Endothelial cell of umbilical vein (primary cell): ENCODE measurements at regions of chr2 and their contacts with region 1.

Region 1: DNA sequence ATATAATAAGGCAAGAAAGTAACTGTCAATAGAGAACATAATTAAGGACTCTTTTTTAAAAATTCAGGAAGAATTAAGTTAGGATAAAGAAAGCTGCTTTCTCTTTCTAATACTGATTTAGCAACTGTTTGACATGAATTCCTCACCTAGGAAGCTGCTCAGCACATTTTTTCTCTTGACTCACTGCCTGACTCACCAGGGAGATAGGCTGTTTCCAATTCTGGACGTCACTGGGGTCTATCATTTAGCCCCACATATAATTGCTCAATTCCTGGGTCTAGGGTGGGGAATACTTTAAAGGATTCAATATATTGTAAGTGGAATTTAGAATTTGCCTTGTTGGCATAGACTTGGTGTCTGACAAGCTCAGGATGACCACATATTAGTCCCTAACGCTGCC is 50.8 kb upstream of the UGP2 start:
- DNase-seq: peak; percentile 37
- H3K4me3 ChIP-seq: no peak overlapping the region
- H3K27ac ChIP-seq: peak overlapping the region; percentile 31
- H3K4me1 ChIP-seq: peaks cover 11% of the 10 kb centered on the region
- H3K27me3 ChIP-seq: no peaks in the 10 kb centered on the region
- CTCF ChIP-seq: no peak
- POLR2A ChIP-seq: no peak

Region 2: DNA sequence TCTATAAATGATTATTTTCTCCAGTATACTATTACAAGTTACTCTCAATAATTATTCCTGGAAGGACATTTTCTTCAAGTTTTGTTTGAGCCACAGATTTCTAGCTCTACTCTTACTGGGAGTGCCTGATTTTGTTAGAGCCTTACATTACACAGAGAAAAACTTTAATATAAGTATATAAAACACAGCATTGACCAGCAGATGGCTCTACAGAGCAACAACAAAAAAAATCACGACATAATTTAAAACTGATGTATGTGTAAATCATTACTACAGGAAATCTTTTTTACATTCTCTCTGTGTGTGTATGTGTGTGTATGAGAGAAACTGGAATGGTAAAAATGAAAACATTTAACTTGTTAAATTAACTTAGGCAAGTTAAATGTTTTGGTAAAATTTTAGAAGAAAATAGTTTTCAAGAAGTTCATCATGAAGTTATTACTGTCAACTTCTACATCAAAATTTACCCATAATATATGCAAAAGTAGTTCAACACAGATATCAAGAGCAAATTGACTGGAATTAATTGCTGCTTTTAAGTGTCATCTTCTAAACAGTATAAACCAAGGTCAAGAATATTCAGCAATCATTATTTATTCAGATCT is 98.8 kb before region 1 on chr2:
- CTCF ChIA-PET with region 1: no interaction called
- POLR2A ChIA-PET with region 1: no interaction called
- dilution Hi-C with region 1: no loop called
- intact Hi-C with region 1: no loop called
- DNase-seq: peak; percentile 78
- H3K4me3 ChIP-seq: no peak overlapping the region
- H3K27ac ChIP-seq: no peak overlapping the region
- H3K4me1 ChIP-seq: no peaks in the 10 kb centered on the region
- H3K27me3 ChIP-seq: no peaks in the 10 kb centered on the region
- CTCF ChIP-seq: peak; percentile 17 to 19
- POLR2A ChIP-seq: no peak

Region 3: DNA sequence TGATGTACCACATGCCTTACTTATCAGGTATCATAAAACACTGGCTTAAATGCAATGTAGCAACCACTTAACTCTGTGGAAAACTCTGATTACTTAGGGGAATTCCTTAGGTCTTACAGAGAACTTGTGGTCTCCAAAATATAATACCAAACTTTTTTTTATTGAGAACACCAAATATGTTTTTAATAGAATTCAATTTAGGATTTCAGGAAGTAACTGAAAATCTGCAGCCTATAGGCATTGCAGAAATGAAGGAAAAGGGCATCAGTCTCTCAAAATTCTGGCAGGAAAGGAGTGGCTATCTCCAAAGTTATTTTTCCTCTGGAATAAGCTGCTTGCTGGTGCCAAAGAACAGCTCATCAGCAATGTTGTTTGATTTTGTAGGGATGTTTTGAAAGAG is 54.6 kb before region 1 on chr2:
- CTCF ChIA-PET with region 1: interaction called, 3 read pairs
- POLR2A ChIA-PET with region 1: no interaction called
- dilution Hi-C with region 1: no loop called
- intact Hi-C with region 1: loop called (anchors 5 kb)
- DNase-seq: peak; percentile 67
- H3K4me3 ChIP-seq: no peak overlapping the region
- H3K27ac ChIP-seq: peak overlapping the region; percentile 48
- H3K4me1 ChIP-seq: peaks cover 38% of the 10 kb centered on the region
- H3K27me3 ChIP-seq: no peaks in the 10 kb centered on the region
- CTCF ChIP-seq: no peak
- POLR2A ChIP-seq: no peak